Thyroid gland (tissue), 4 donors: ENCODE measurements at regions of chr12 and their contacts with region 1.

Region 1: GRCh38 chr12:120710031-120710804 is at the start of gene UNC119B:
- DNase-seq: peak; percentile 71 to 72
- H3K4me3 ChIP-seq: peak within 1 kb of the TSS; percentile 33 to 87 (median 85)
- H3K27ac ChIP-seq: peak within 1 kb of the TSS; percentile 91 to 97 (median 94)
- H3K4me1 ChIP-seq: peaks cover 24 to 34% of the 10 kb centered on the region in 2 donors
- H3K27me3 ChIP-seq: no peaks in the 10 kb centered on the region
- CTCF ChIP-seq: no peak
- POLR2A ChIP-seq: peak in 1 of 2 donors; percentile 71
- total RNA-seq, gene UNC119B: 44.1 to 65.3 (median 61.6) TPM

Region 2: DNA sequence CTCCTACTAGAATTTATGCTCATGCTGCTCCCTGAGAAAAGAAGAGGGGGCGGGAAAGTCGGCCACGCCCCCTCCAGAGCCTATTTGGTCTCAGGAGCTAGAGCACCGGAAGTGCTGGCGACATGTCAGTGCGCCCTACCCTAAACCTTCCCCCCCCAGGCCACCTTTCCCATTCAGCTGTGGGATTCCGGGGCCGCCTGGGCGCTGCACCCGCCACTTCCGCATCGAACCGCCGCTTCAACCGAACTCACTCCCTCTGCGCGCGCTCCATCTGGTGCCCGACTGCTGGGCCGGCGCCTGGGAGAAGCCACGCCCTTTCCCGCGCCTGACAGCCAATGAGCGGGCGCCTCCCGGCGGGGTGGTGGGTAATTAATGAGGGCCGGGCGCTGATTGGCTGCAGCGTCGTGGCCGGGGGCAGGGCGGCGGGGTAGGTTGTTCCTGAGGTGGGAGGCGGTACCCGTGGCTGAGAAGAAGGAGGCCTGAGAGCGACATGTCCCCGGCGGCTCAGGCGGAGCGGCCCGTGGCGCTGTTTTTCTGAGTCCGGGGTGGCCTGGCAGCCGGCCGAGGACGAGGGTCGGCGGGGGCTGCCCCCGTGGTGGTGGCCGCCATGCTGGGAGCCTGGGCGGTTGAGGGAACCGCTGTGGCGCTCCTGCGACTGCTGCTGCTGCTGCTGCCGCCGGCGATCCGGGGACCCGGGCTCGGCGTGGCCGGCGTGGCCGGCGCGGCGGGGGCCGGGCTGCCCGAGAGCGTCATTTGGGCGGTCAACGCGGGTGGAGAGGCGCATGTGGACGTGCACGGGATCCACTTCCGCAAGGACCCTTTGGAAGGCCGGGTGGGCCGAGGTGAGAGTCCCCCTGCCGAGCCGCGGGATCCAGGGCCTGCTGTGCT is 23.3 kb before region 1 on chr12 and contains the start of gene MLEC:
- intact Hi-C with region 1: loop called (anchors 2 kb)
- DNase-seq: peak; percentile 99
- H3K4me3 ChIP-seq: peak within 1 kb of the TSS; percentile 72 to 97 (median 92)
- H3K27ac ChIP-seq: peak within 1 kb of the TSS; percentile 76 to 95 (median 79)
- H3K4me1 ChIP-seq: peaks cover 27 to 35% of the 10 kb centered on the region in 2 donors
- H3K27me3 ChIP-seq: no peaks in the 10 kb centered on the region
- CTCF ChIP-seq: peak in 1 of 6 experiments; percentile 14
- POLR2A ChIP-seq: peak in 1 of 2 donors; percentile 97
- total RNA-seq, gene MLEC: 122 to 288 (median 187) TPM

Region 3: DNA sequence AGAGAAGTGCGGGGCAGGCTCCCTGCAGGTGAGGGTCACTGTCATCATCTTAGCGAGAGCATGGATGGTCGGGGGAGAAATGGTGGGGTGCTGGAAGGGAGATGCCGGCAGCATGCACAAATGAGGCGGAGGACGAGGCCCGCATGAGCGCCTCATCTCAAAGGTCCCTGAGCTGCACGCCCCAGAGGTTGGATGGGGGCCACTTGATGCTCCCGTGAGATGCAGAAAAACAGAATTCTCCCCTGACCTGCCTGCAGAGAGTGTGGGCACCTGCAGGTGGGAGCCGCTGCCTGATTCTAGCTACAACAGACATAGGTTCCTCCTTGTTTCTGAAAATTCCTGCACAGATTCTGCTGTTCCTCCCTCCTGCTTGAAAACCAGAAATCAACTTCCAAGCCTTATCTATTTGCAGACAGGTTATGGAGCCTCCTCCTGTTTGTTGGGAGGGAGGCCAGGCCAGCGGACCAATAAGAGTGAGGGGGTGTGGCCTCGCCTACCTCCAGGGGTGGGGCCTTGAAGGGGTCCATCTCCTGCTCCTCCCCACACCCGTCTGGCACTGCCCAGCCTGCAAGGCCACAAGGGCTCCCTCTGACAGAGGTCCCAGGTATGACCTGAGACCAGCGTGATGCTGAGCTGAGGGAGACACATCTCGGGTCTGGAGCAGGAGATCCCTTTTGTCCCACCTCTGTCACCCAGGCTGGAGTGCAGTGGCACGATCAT is 803.4 kb after region 1 on chr12:
- intact Hi-C with region 1: no loop called
- DNase-seq: peak; percentile 65 to 72
- H3K4me3 ChIP-seq: no peak overlapping the region
- H3K27ac ChIP-seq: no peak overlapping the region
- H3K4me1 ChIP-seq: peaks cover 0 to 2% of the 10 kb centered on the region in 2 donors
- H3K27me3 ChIP-seq: no peaks in the 10 kb centered on the region
- CTCF ChIP-seq: no peak
- POLR2A ChIP-seq: no peak